ENCODE measurements at regions of chr4 and their contacts with region 1.

Region 1: DNA sequence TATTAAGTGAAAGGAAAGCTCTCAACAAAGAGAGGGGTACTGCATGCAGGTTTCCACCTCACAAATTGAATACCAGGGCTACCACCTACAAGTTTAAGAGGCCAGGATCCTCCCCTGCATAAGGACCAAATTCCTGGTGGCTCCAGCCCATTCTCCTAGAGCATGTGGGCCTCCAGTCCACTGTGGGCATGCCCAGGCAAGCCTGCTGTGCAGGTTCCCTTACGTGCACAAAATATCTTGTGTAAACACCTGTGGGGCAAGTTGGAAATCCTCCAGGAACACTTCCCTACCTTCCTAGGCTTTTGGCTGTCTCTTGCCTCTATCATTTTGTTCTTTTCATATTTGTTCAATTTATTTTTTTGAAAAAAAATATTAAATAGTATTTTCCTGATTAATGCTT is 724.2 kb downstream of the ARAP2 start:
- DNase-seq: no peak
- H3K4me3 ChIP-seq: no peak overlapping the region
- H3K27ac ChIP-seq: no peak overlapping the region
- H3K4me1 ChIP-seq: no peaks in the 10 kb centered on the region
- H3K27me3 ChIP-seq: no peaks in the 10 kb centered on the region
- CTCF ChIP-seq: no peak
- POLR2A ChIP-seq: no peak

Region 2: DNA sequence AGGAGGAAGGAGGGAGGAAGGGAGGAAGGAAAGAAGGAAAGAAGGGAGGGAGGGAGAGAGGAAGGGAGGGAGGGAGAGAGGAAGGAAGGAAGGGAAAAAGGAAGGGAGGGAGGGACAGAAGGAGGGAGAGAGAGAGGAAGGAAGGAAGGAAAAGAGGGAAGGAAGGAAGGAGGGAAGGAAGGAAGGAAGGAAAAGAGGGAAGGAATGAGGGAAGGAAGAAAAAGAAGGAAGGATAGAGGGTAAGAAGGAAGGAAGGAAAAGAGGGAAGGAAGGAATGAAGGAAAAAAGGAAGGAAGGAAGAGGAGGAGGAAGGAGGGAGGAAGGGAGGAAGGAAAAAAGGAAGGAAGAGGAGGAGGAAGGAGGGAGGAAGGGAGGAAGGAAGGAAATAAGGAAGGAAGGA is 72.6 kb before region 1 on chr4:
- intact Hi-C with region 1: loop called (anchors 2 kb)
- DNase-seq: no peak
- H3K4me3 ChIP-seq: no peak overlapping the region
- H3K27ac ChIP-seq: no peak overlapping the region
- H3K4me1 ChIP-seq: no peaks in the 10 kb centered on the region
- H3K27me3 ChIP-seq: no peaks in the 10 kb centered on the region
- CTCF ChIP-seq: no peak
- POLR2A ChIP-seq: no peak

Measured in breast epithelium (tissue), 4 donors.